Activated CD4-positive, alpha-beta T cell treated with anti-CD3 and anti-CD28 coated beads, Interleukin-2, amount 10 ng/mL, durations not matched to agents 24 days and 14 days (primary cell): ENCODE measurements at regions of chr11 and their contacts with region 1.

Region 1: GRCh38 chr11:76444384-76445123 is at the start of gene EMSY:
- DNase-seq: peak; percentile 97
- H3K4me3 Mint-ChIP-seq: peak within 1 kb of the TSS; percentile 97
- H3K27ac Mint-ChIP-seq: peak within 1 kb of the TSS; percentile 97
- H3K4me1 Mint-ChIP-seq: peaks cover 26% of the 10 kb centered on the region
- H3K27me3 Mint-ChIP-seq: no peaks in the 10 kb centered on the region
- total RNA-seq, gene EMSY: 32.1 and 33.2 TPM in 2 replicates

Region 2: DNA sequence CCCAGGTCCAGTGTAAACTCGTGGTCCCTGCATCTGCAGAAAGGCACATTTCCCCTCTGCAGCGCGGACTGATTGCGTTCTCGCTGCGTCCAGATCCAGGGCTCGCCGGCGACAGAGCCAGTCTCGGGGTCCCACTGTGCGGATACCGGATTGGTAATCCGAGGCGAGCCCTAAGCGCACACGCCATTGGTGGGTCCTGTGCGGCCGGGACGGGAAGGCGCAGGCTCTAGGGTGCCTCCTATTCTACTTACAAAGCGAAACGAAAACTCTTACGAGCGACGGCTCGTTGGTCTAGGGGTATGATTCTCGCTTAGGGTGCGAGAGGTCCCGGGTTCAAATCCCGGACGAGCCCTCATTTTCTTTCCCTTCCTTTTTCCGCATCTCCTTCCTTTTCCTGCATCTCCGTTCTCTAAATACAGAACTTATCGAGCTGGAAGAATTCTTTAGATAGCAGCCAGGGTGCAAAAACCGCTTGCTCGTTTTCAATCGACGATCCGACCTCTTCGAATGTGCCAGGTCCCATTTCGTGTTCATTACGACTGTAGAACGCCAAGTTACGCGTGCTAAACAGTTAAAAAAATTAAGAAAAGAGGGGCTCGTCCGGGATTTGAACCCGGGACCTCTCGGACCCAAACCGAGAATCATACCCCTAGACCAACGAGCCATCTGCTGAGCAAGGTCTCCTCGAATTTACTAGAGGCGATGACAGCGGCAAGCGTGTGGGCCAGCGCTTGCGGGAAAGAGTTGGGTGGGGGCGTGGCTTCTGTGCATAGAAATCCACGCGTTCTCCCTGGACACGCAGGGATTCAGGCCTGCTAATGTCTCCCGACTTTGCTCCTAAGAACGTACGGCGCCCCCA is 209.1 kb before region 1 on chr11:
- intact Hi-C with region 1: loop called (anchors 1 kb)
- DNase-seq: peak; percentile 98
- H3K4me3 Mint-ChIP-seq: peak overlapping the region; percentile 96
- H3K27ac Mint-ChIP-seq: peak overlapping the region; percentile 96
- H3K4me1 Mint-ChIP-seq: peaks cover 48% of the 10 kb centered on the region
- H3K27me3 Mint-ChIP-seq: peaks cover 13% of the 10 kb centered on the region

Region 3: DNA sequence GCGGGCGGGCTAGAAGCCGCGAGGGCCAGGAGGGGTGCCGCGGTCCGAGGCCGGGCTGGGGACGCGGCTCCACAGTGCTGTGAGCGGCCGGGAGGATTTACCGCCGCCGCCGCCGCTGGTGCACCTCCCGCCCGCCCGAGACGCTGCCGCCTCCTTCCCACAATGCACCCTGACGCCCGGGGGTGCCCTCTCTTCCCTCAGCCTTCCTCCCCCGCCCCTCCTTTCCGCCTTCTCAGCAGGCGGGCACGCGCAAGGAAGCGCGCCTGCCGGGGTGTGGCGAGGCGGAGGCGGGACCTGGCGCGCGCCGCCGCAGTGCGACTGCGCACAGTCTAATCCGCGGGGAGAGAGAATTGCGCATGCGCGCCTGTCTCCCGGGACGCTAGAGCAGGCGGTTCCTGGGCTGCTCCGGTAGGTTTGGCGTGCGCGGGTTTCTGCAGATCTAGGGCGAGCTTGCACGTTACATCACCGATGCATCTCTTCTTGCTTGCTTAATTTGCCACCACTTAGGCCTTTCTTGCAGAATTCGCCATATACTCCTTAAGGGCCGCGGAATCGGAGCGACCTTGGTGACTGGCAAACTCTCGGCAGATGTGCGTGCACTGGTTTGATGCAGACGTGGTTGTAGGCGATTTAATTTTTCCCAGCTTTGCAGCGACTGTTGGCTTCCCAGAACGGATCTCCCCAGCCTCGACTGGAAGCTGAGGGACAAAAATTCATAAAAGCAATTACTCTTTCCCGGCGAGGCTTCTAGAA is 63.4 kb before region 1 on chr11 and contains the starts of genes GVQW3 and THAP12:
- intact Hi-C with region 1: loop called (anchors 1 kb)
- DNase-seq: peak; percentile 99
- H3K4me3 Mint-ChIP-seq: peak within 1 kb of the TSS; percentile 95
- H3K27ac Mint-ChIP-seq: peak within 1 kb of the TSS; percentile 91
- H3K4me1 Mint-ChIP-seq: peaks cover 40% of the 10 kb centered on the region
- H3K27me3 Mint-ChIP-seq: no peaks in the 10 kb centered on the region
- total RNA-seq, gene GVQW3: 3.7 and 4.3 TPM in 2 replicates
- total RNA-seq, gene THAP12: 77.8 and 80.9 TPM in 2 replicates

Region 4: DNA sequence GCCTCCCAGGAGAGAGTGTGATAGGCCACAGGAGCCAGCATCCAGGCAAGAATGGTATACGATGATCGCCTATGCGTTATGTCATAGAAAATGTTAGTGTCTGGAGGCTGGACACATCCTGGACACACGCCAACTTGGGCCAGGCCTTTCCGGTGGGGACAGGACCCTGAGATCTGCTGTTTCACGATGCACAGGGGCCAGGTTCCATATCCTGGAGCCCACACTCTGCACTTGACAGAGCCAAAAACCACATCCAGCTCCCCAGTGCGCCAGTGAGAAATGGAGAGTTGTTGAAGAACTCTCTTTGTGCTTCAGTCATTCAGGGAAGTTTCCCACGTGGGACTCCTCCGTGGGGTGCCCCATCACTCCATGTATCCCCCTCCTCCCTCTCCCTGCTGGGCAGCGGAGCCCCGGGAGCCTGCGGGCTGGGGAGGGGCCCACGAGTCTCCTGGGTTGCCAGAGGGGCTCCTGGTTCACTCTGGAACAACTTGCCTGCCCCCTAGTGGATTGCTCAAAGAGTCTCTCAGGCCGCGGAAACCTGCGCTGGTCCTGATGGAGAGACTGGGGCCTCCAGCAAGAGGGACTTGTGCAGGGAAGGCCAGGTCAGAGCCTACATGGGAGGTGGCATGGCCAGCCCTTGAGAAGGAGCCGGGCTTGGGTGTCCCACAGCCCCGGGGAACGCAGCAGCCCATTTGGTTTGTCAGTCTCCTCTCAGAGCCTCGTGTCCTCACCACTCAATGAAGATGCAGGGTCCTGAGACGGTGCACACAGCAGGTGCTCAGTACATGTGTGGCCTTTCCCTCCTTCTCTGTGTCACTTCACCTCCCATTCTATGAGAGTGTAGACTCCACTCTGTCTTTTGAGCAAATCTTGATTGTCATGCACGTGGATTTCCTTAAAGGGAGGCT is 236.2 kb after region 1 on chr11:
- intact Hi-C with region 1: loop called (anchors 2 kb)
- DNase-seq: peak; percentile 91
- H3K4me3 Mint-ChIP-seq: no peak overlapping the region
- H3K27ac Mint-ChIP-seq: no peak overlapping the region
- H3K4me1 Mint-ChIP-seq: peaks cover 22% of the 10 kb centered on the region
- H3K27me3 Mint-ChIP-seq: peaks cover 5% of the 10 kb centered on the region